ENCODE measurements at regions of chr5 and their contacts with region 1.

Region 1: GRCh38 chr5:54743997-54744788 is 226.6 kb downstream of the SNX18 start:
- DNase-seq: peak; percentile 69 to 78 (median 75)
- H3K4me3 ChIP-seq: no peak overlapping the region
- H3K4me3 Mint-ChIP-seq: peak overlapping the region; percentile 24 to 84 (median 60)
- H3K27ac ChIP-seq: peak overlapping the region; percentile 20
- H3K27ac Mint-ChIP-seq: peak overlapping the region; percentile 82 to 93 (median 84)
- H3K4me1 ChIP-seq: peaks cover 49% of the 10 kb centered on the region
- H3K4me1 Mint-ChIP-seq: peaks cover 25 to 42% (median 33%) of the 10 kb centered on the region in 4 donors
- H3K27me3 ChIP-seq: no peaks in the 10 kb centered on the region
- H3K27me3 Mint-ChIP-seq: no peaks in the 10 kb centered on the region

Region 2: DNA sequence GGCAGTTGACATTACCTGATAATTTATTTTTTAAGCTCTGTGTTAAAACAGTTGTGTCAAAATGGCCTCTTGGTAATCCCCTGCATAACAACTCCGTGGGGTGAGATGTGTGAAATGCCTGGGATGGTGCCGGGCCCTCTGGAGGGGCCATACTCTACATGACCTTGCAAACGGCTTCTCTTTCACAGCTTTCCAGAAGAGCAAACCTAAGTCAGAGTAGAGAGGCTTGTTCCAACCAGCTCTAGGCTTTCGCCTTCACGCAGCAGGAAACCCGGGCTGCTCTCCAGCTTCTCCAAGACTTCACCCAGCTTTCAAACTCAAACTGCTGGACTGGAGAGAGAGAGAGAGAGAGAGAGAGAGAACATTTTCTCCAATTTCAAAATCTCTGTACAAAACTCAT is 106.5 kb before region 1 on chr5:
- CTCF ChIA-PET with region 1: no interaction called
- POLR2A ChIA-PET with region 1: interaction called, 12 read pairs
- intact Hi-C with region 1: no loop called
- DNase-seq: peak in 1 of 5 donors; percentile 6
- H3K4me3 ChIP-seq: no peak overlapping the region
- H3K4me3 Mint-ChIP-seq: peak overlapping the region in 6 of 8 donors; percentile 26 to 75 (median 54)
- H3K27ac ChIP-seq: no peak overlapping the region
- H3K27ac Mint-ChIP-seq: peak overlapping the region in 5 of 7 donors; percentile 46 to 78 (median 73)
- H3K4me1 ChIP-seq: peaks cover 25% of the 10 kb centered on the region
- H3K4me1 Mint-ChIP-seq: peaks cover 15 to 30% (median 24%) of the 10 kb centered on the region in 4 donors
- H3K27me3 ChIP-seq: no peaks in the 10 kb centered on the region
- H3K27me3 Mint-ChIP-seq: no peaks in the 10 kb centered on the region

Region 3: GRCh38 chr5:54673523-54674225 is 70.5 kb before region 1 on chr5:
- CTCF ChIA-PET with region 1: no interaction called
- POLR2A ChIA-PET with region 1: interaction called, 18 read pairs
- intact Hi-C with region 1: no loop called
- DNase-seq: peak; percentile 35 to 67 (median 40)
- H3K4me3 ChIP-seq: no peak overlapping the region
- H3K4me3 Mint-ChIP-seq: peak overlapping the region in 7 of 8 donors; percentile 3 to 70 (median 51)
- H3K27ac ChIP-seq: no peak overlapping the region
- H3K27ac Mint-ChIP-seq: peak overlapping the region; percentile 0 to 78 (median 24)
- H3K4me1 ChIP-seq: peaks cover 40% of the 10 kb centered on the region
- H3K4me1 Mint-ChIP-seq: peaks cover 39 to 66% (median 54%) of the 10 kb centered on the region in 4 donors
- H3K27me3 ChIP-seq: no peaks in the 10 kb centered on the region
- H3K27me3 Mint-ChIP-seq: no peaks in the 10 kb centered on the region

Region 4: GRCh38 chr5:54733101-54733500 is 11.1 kb before region 1 on chr5:
- CTCF ChIA-PET with region 1: interaction called, 14 read pairs
- POLR2A ChIA-PET with region 1: interaction called, 8 read pairs
- intact Hi-C with region 1: no loop called
- DNase-seq: no peak
- H3K4me3 ChIP-seq: no peak overlapping the region
- H3K4me3 Mint-ChIP-seq: no peak overlapping the region
- H3K27ac ChIP-seq: no peak overlapping the region
- H3K27ac Mint-ChIP-seq: no peak overlapping the region
- H3K4me1 ChIP-seq: peaks cover 2% of the 10 kb centered on the region
- H3K4me1 Mint-ChIP-seq: no peaks in the 10 kb centered on the region
- H3K27me3 ChIP-seq: no peaks in the 10 kb centered on the region
- H3K27me3 Mint-ChIP-seq: peaks cover 0 to 2% of the 10 kb centered on the region in 2 donors

Measured in CD4-positive, alpha-beta memory T cell (primary cell).